ENCODE measurements at regions of chr16 and their contacts with region 1.

Region 1: DNA sequence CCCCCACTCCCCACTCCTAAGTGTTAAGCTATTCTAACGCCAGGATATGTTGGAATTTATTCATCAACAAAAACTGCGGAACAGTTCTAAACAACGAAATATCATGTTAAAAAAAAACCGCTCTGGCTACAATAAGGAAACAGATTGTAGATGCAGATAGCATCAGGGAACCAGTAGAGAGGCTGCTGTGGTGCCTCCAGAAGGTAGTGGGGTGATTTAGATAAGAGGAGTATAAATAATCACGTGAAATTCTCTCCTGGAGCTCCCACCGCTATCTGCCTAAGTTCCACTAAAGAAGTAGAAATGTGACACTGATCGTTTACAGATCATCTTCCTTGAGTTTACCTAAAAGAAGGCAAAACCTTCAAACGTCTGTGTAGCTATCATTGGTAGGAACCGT is 8.0 kb downstream of the AHSP start:
- DNase-seq: peak; percentile 92 to 98 (median 96)
- H3K4me3 ChIP-seq: peak overlapping the region in 5 of 7 experiments; percentile 5 to 78 (median 34)
- H3K27ac ChIP-seq: peak overlapping the region in 1 of 2 experiments; percentile 72
- H3K4me1 ChIP-seq: peaks cover 6 to 50% (median 27%) of the 10 kb centered on the region in 4 experiments
- H3K27me3 ChIP-seq: no peaks in the 10 kb centered on the region

Region 2: DNA sequence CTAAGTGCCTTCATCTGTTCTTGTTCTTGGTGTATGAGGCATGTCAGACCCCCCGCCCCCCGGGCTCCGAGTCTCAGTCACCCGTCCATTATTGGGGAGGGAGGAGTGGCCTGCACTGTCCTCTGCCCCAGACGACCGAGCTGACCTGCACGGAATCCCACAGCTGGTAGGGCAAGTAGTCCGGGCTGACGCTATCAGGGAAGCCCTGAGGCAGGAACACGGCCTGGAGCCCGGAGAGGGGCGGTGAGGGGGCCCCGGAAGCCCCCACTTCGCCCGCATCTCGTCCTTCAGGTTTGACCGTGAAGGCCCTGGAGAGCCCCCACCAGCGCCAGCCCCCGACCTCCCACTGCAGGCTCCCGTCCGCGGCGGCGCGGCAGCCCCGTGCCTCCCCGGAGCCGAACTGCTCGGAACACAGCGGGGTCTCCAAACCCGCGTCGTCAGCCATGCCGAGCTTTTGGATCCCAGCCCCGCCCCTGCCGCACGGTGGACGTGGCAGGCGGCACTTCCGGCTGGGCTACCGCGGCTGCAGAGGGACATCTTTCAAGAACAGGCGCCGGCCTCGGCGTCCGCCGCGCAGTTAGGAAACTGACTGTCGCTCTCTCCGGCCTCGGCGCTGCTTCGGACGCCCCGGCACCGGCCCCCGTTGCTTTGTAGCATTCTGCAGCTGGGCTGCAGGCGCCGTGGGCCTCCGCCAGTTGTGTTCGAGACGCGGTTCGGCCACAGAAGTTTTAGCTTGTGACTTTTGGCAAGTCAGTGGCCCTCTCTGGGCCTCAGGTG is 27.6 kb before region 1 on chr16 and contains the start of gene RUSF1:
- CTCF ChIA-PET with region 1: interaction called, 10 read pairs
- POLR2A ChIA-PET with region 1: interaction called, 5 read pairs
- DNase-seq: peak; percentile 82 to 93 (median 89)
- H3K4me3 ChIP-seq: peak within 1 kb of the TSS; percentile 72 to 94 (median 91)
- H3K27ac ChIP-seq: peak within 1 kb of the TSS; percentile 89 to 94
- H3K4me1 ChIP-seq: peaks cover 30 to 59% (median 50%) of the 10 kb centered on the region in 4 experiments
- H3K27me3 ChIP-seq: no peaks in the 10 kb centered on the region

Measured in common myeloid progenitor, CD34-positive (primary cell).